ENCODE measurements at regions of chr17 and their contacts with region 1.

Region 1: GRCh38 chr17:50478391-50479381 is at the start of gene RSAD1:
- DNase-seq: peak; percentile 95
- ATAC-seq: peak; percentile 90
- H3K4me3 ChIP-seq: peak within 1 kb of the TSS; percentile 78 to 93 (median 91)
- H3K4me3 Mint-ChIP-seq: peak within 1 kb of the TSS; percentile 92
- H3K27ac ChIP-seq: peak within 1 kb of the TSS; percentile 69 to 86
- H3K27ac Mint-ChIP-seq: peak within 1 kb of the TSS; percentile 91
- H3K4me1 ChIP-seq: peaks cover 13 to 22% of the 10 kb centered on the region in 2 donors
- H3K4me1 Mint-ChIP-seq: peaks cover 26% of the 10 kb centered on the region
- H3K27me3 ChIP-seq: peaks cover 0 to 7% (median 0%) of the 10 kb centered on the region in 4 experiments
- H3K27me3 Mint-ChIP-seq: peaks cover 3% of the 10 kb centered on the region
- CTCF ChIP-seq: peak; percentile 95
- total RNA-seq, gene RSAD1: 52.9 and 53.4 TPM in 2 replicates

Region 2: GRCh38 chr17:50064258-50065001 is 414.3 kb before region 1 on chr17:
- CTCF ChIA-PET with region 1: no interaction called
- POLR2A ChIA-PET with region 1: no interaction called
- intact Hi-C with region 1: no loop called
- DNase-seq: no peak
- ATAC-seq: no peak
- H3K4me3 ChIP-seq: no peak overlapping the region
- H3K4me3 Mint-ChIP-seq: no peak overlapping the region
- H3K27ac ChIP-seq: no peak overlapping the region
- H3K27ac Mint-ChIP-seq: no peak overlapping the region
- H3K4me1 ChIP-seq: peaks cover 0 to 6% of the 10 kb centered on the region in 2 donors
- H3K4me1 Mint-ChIP-seq: no peaks in the 10 kb centered on the region
- H3K27me3 ChIP-seq: peaks cover 0 to 15% (median 0%) of the 10 kb centered on the region in 4 experiments
- H3K27me3 Mint-ChIP-seq: peaks cover 6% of the 10 kb centered on the region
- CTCF ChIP-seq: no peak

Region 3: GRCh38 chr17:50361561-50362480 is 116.9 kb before region 1 on chr17:
- CTCF ChIA-PET with region 1: interaction called, 34 read pairs
- POLR2A ChIA-PET with region 1: interaction called, 8 read pairs
- intact Hi-C with region 1: loop called (anchors 1 kb)
- DNase-seq: peak; percentile 76
- ATAC-seq: peak; percentile 93
- H3K4me3 ChIP-seq: no peak overlapping the region
- H3K4me3 Mint-ChIP-seq: no peak overlapping the region
- H3K27ac ChIP-seq: no peak overlapping the region
- H3K27ac Mint-ChIP-seq: peak overlapping the region; percentile 51
- H3K4me1 ChIP-seq: peaks cover 5 to 8% of the 10 kb centered on the region in 2 donors
- H3K4me1 Mint-ChIP-seq: peaks cover 8% of the 10 kb centered on the region
- H3K27me3 ChIP-seq: no peaks in the 10 kb centered on the region
- H3K27me3 Mint-ChIP-seq: no peaks in the 10 kb centered on the region
- CTCF ChIP-seq: peak; percentile 81

Region 4: GRCh38 chr17:50397111-50397918 is 81.4 kb before region 1 on chr17 and contains the start of gene LRRC59:
- CTCF ChIA-PET with region 1: interaction called, 45 read pairs
- POLR2A ChIA-PET with region 1: interaction called, 9 read pairs
- intact Hi-C with region 1: loop called (anchors 1 kb)
- DNase-seq: peak; percentile 95
- ATAC-seq: peak; percentile 100
- H3K4me3 ChIP-seq: peak within 1 kb of the TSS; percentile 62 to 95 (median 92)
- H3K4me3 Mint-ChIP-seq: peak within 1 kb of the TSS; percentile 89
- H3K27ac ChIP-seq: peak within 1 kb of the TSS; percentile 77 to 89
- H3K27ac Mint-ChIP-seq: peak within 1 kb of the TSS; percentile 91
- H3K4me1 ChIP-seq: peaks cover 21 to 25% of the 10 kb centered on the region in 2 donors
- H3K4me1 Mint-ChIP-seq: peaks cover 31% of the 10 kb centered on the region
- H3K27me3 ChIP-seq: no peaks in the 10 kb centered on the region
- H3K27me3 Mint-ChIP-seq: no peaks in the 10 kb centered on the region
- CTCF ChIP-seq: peak; percentile 99
- total RNA-seq, gene LRRC59: 29.5 and 31.2 TPM in 2 replicates

Region 5: GRCh38 chr17:50443368-50443971 is 35.2 kb before region 1 on chr17:
- CTCF ChIA-PET with region 1: no interaction called
- POLR2A ChIA-PET with region 1: no interaction called
- intact Hi-C with region 1: no loop called
- DNase-seq: no peak
- ATAC-seq: no peak
- H3K4me3 ChIP-seq: no peak overlapping the region
- H3K4me3 Mint-ChIP-seq: no peak overlapping the region
- H3K27ac ChIP-seq: no peak overlapping the region
- H3K27ac Mint-ChIP-seq: no peak overlapping the region
- H3K4me1 ChIP-seq: no peaks in the 10 kb centered on the region
- H3K4me1 Mint-ChIP-seq: no peaks in the 10 kb centered on the region
- H3K27me3 ChIP-seq: no peaks in the 10 kb centered on the region
- H3K27me3 Mint-ChIP-seq: no peaks in the 10 kb centered on the region
- CTCF ChIP-seq: no peak

Region 6: DNA sequence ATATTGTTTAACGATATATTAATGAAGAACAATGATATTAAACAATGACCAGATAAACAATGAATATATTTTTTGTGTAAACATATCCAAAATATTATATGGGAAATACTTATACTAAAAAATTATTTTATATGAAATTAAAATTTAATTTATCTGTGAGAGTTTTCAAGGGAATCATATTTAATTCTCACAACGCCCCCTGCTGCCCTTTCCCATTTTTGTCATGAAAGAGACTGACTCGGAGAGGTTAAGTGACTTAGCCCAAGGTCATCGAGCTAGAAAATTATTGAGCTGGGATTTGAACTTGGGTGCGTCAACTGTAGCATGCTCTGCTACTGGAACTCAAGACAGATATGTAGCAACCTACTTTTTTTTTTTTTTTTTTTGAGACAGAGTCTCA is 22.4 kb after region 1 on chr17:
- CTCF ChIA-PET with region 1: interaction called, 10 read pairs
- POLR2A ChIA-PET with region 1: no interaction called
- intact Hi-C with region 1: loop called (anchors 2 kb)
- DNase-seq: peak; percentile 34
- ATAC-seq: no peak
- H3K4me3 ChIP-seq: no peak overlapping the region
- H3K4me3 Mint-ChIP-seq: no peak overlapping the region
- H3K27ac ChIP-seq: no peak overlapping the region
- H3K27ac Mint-ChIP-seq: no peak overlapping the region
- H3K4me1 ChIP-seq: no peaks in the 10 kb centered on the region
- H3K4me1 Mint-ChIP-seq: no peaks in the 10 kb centered on the region
- H3K27me3 ChIP-seq: peaks cover 0 to 2% (median 0%) of the 10 kb centered on the region in 4 experiments
- H3K27me3 Mint-ChIP-seq: peaks cover 3% of the 10 kb centered on the region
- CTCF ChIP-seq: peak; percentile 62

Region 7: DNA sequence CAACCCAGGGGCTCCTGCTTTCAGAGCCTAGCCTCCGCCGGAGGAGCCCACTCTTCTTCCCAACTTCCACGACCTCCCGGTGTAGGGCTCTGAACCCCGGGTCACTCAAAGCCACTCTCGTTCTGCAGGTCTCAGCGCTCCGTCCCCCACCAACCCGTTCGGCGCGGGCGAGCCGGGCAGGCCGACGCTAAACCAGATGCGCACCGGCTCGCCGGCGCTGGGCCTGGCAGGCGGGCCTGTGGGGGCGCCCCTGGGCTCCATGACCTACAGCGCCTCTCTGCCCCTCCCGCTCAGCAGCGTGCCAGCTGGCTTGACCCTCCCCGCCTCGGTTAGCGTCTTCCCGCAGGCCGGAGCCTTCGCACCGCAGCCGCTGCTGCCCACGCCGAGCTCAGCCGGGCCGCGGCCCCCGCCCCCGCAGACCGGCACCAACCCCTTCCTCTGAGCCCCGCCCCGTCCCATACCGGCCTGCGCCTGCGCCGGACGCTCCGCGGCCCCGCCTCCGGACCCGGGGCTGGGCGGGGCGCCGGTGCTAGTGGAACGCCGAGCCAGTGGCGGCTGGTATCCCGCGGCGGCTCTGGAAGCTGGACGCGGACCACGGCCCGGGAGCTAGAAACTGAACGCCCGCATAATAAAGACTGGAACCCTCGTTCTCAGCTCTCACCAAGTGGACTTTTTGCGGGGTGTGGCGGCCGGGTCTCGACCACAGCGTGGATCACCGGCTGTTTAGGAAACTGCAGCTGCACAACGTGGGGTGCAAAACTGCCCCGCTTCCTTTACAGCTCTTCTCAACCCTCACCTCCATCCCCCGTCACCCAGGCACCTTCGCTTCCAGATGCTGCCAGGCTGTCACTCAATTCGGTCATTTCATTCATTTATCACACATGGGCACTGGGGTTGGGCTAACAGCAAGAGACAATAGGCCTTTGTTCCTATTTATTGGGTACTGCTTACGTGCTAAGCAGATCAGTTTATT is 63.3 kb after region 1 on chr17:
- CTCF ChIA-PET with region 1: interaction called, 9 read pairs
- POLR2A ChIA-PET with region 1: no interaction called
- intact Hi-C with region 1: loop called (anchors 2 kb)
- DNase-seq: peak; percentile 91
- ATAC-seq: peak; percentile 85
- H3K4me3 ChIP-seq: peak overlapping the region; percentile 21 to 73 (median 52)
- H3K4me3 Mint-ChIP-seq: peak overlapping the region; percentile 95
- H3K27ac ChIP-seq: peak overlapping the region in 1 of 2 donors; percentile 41
- H3K27ac Mint-ChIP-seq: peak overlapping the region; percentile 79
- H3K4me1 ChIP-seq: peaks cover 16 to 22% of the 10 kb centered on the region in 2 donors
- H3K4me1 Mint-ChIP-seq: peaks cover 17% of the 10 kb centered on the region
- H3K27me3 ChIP-seq: peaks cover 0 to 15% (median 5%) of the 10 kb centered on the region in 4 experiments
- H3K27me3 Mint-ChIP-seq: peaks cover 7% of the 10 kb centered on the region
- CTCF ChIP-seq: peak; percentile 57

Region 8: GRCh38 chr17:50707289-50708049 is 228.8 kb after region 1 on chr17 and contains the start of gene ANKRD40:
- CTCF ChIA-PET with region 1: no interaction called
- POLR2A ChIA-PET with region 1: no interaction called
- intact Hi-C with region 1: loop called (anchors 5 kb)
- DNase-seq: peak; percentile 95
- ATAC-seq: peak; percentile 78
- H3K4me3 ChIP-seq: peak within 1 kb of the TSS; percentile 57 to 87 (median 80)
- H3K4me3 Mint-ChIP-seq: peak within 1 kb of the TSS; percentile 96
- H3K27ac ChIP-seq: peak within 1 kb of the TSS; percentile 92 to 99
- H3K27ac Mint-ChIP-seq: peak within 1 kb of the TSS; percentile 97
- H3K4me1 ChIP-seq: peaks cover 25 to 30% of the 10 kb centered on the region in 2 donors
- H3K4me1 Mint-ChIP-seq: peaks cover 43% of the 10 kb centered on the region
- H3K27me3 ChIP-seq: no peaks in the 10 kb centered on the region
- H3K27me3 Mint-ChIP-seq: no peaks in the 10 kb centered on the region
- CTCF ChIP-seq: no peak
- total RNA-seq, gene ANKRD40: 35.3 and 43.1 TPM in 2 replicates